Naive thymus-derived CD4-positive, alpha-beta T cell (primary cell): ENCODE measurements at regions of chr1 and their contacts with region 1.

Region 1: GRCh38 chr1:42035830-42036604 is 117.2 kb upstream of the GUCA2B start:
- DNase-seq: peak; percentile 92 to 100 (median 96)
- ATAC-seq: peak; percentile 98
- H3K4me3 ChIP-seq: peak overlapping the region; percentile 72
- H3K4me3 Mint-ChIP-seq: peak overlapping the region in 9 of 10 donors; percentile 74 to 88 (median 84)
- H3K27ac ChIP-seq: peak overlapping the region; percentile 74
- H3K27ac Mint-ChIP-seq: peak overlapping the region in 5 of 9 donors; percentile 37 to 82 (median 65)
- H3K4me1 ChIP-seq: peaks cover 25 to 43% of the 10 kb centered on the region in 2 donors
- H3K4me1 Mint-ChIP-seq: peaks cover 23 to 45% (median 39%) of the 10 kb centered on the region in 7 donors
- H3K27me3 ChIP-seq: no peaks in the 10 kb centered on the region
- H3K27me3 Mint-ChIP-seq: peaks cover 0 to 20% (median 0%) of the 10 kb centered on the region in 5 donors

Region 2: GRCh38 chr1:41360993-41361753 is 674.8 kb before region 1 on chr1 and contains the start of gene FOXO6:
- CTCF ChIA-PET with region 1: no interaction called
- POLR2A ChIA-PET with region 1: no interaction called
- intact Hi-C with region 1: loop called in 1 of 2 experiments (anchors 2 kb)
- DNase-seq: peak; percentile 87 to 94 (median 91)
- ATAC-seq: peak; percentile 95
- H3K4me3 ChIP-seq: peak within 1 kb of the TSS; percentile 51
- H3K4me3 Mint-ChIP-seq: peak within 1 kb of the TSS; percentile 65 to 86 (median 80)
- H3K27ac ChIP-seq: peak within 1 kb of the TSS; percentile 25
- H3K27ac Mint-ChIP-seq: peak within 1 kb of the TSS in 7 of 9 donors; percentile 3 to 91 (median 73)
- H3K4me1 ChIP-seq: peaks cover 4 to 6% of the 10 kb centered on the region in 2 donors
- H3K4me1 Mint-ChIP-seq: peaks cover 4 to 28% (median 9%) of the 10 kb centered on the region in 7 donors
- H3K27me3 ChIP-seq: peaks cover 5 to 7% of the 10 kb centered on the region in 2 donors
- H3K27me3 Mint-ChIP-seq: peaks cover 10 to 58% (median 35%) of the 10 kb centered on the region in 5 donors
- total RNA-seq, gene FOXO6: 0.66 to 1.3 TPM in 2 of 5 experiments, not detected in the others

Region 3: DNA sequence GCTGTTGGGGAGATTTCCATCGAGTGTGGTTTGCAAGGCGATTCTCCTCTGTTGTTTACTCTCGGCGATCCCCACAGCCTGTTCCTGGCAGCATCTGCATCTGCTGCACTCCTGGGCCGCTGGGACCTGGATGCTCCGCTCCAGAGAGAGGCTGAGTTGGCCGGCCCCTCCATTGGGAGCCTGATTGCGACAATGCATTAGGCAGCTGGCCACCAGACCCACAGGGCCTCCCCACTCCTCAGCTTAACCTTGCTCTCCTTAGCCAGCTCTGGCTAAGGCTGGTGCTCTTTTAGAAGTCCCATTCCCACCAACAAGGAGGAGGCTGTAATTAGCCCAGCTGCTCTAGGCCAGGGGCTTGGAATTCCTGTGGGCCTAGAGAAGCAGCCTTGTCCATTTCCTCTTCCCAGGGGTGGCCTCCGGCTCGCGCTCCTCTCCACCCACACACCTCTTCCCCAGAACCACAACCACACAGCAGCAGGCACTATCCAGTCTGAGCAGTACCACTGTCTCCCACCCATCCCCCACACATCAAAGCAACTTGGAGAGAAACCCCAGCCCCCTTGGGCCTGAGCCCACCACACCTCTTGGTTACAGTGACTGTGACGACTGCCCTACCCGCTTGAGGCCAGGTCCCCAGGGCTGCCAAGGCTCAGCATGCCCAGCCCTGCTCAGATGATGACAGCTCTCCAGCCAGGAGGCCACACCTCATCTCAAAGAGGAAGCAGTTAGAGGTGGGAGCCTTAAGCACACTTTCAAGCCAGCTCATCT is 357.7 kb before region 1 on chr1:
- CTCF ChIA-PET with region 1: no interaction called
- POLR2A ChIA-PET with region 1: no interaction called
- intact Hi-C with region 1: loop called in 1 of 2 experiments (anchors 5 kb)
- DNase-seq: no peak
- ATAC-seq: peak; percentile 46
- H3K4me3 ChIP-seq: no peak overlapping the region
- H3K4me3 Mint-ChIP-seq: peak overlapping the region in 2 of 10 donors; percentile 43 to 76
- H3K27ac ChIP-seq: no peak overlapping the region
- H3K27ac Mint-ChIP-seq: peak overlapping the region in 1 of 9 donors; percentile 90
- H3K4me1 ChIP-seq: peaks cover 40 to 49% of the 10 kb centered on the region in 2 donors
- H3K4me1 Mint-ChIP-seq: peaks cover 30 to 92% (median 58%) of the 10 kb centered on the region in 7 donors
- H3K27me3 ChIP-seq: no peaks in the 10 kb centered on the region
- H3K27me3 Mint-ChIP-seq: no peaks in the 10 kb centered on the region

Region 4: DNA sequence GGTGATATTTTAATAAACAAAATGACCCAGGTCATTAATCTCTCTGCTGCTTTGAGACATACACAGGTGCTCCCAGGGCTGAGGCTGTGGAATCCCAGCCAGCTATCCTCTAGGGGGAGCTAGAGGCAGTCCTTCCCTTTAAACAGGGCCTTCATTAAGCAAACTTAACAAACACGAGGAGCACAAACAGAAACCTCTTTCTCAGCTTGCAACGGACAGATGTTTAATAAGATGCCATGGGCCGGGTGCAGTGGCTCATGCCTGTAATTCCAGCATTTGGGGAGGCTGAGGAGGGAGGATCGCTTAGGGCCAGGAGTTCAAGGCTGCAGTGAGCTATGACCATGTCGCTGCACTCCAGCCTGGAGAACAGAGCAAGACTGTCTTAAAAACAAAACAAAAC is 224.0 kb before region 1 on chr1:
- CTCF ChIA-PET with region 1: no interaction called
- POLR2A ChIA-PET with region 1: no interaction called
- intact Hi-C with region 1: loop called (anchors 2 to 10 kb)
- DNase-seq: peak in 6 of 9 donors; percentile 23 to 63 (median 47)
- ATAC-seq: peak; percentile 77
- H3K4me3 ChIP-seq: no peak overlapping the region
- H3K4me3 Mint-ChIP-seq: peak overlapping the region in 1 of 10 donors; percentile 29
- H3K27ac ChIP-seq: no peak overlapping the region
- H3K27ac Mint-ChIP-seq: peak overlapping the region in 2 of 9 donors; percentile 21 to 66
- H3K4me1 ChIP-seq: peaks cover 5 to 28% of the 10 kb centered on the region in 2 donors
- H3K4me1 Mint-ChIP-seq: peaks cover 17 to 48% (median 26%) of the 10 kb centered on the region in 7 donors
- H3K27me3 ChIP-seq: no peaks in the 10 kb centered on the region
- H3K27me3 Mint-ChIP-seq: no peaks in the 10 kb centered on the region

Region 5: GRCh38 chr1:41919764-41920397 is 116.1 kb before region 1 on chr1:
- CTCF ChIA-PET with region 1: no interaction called
- POLR2A ChIA-PET with region 1: interaction called, 4 read pairs
- intact Hi-C with region 1: loop called (anchors 1 kb)
- DNase-seq: peak; percentile 51 to 82 (median 79)
- ATAC-seq: peak; percentile 89
- H3K4me3 ChIP-seq: peak overlapping the region; percentile 74
- H3K4me3 Mint-ChIP-seq: peak overlapping the region; percentile 90 to 97 (median 95)
- H3K27ac ChIP-seq: peak overlapping the region; percentile 52
- H3K27ac Mint-ChIP-seq: peak overlapping the region; percentile 84 to 99 (median 96)
- H3K4me1 ChIP-seq: peaks cover 48 to 54% of the 10 kb centered on the region in 2 donors
- H3K4me1 Mint-ChIP-seq: peaks cover 37 to 62% (median 56%) of the 10 kb centered on the region in 7 donors
- H3K27me3 ChIP-seq: no peaks in the 10 kb centered on the region
- H3K27me3 Mint-ChIP-seq: peaks cover 0 to 17% (median 0%) of the 10 kb centered on the region in 5 donors

Region 6: GRCh38 chr1:42109600-42109999 is 73.6 kb after region 1 on chr1:
- CTCF ChIA-PET with region 1: no interaction called
- POLR2A ChIA-PET with region 1: no interaction called
- intact Hi-C with region 1: no loop called
- DNase-seq: no peak
- ATAC-seq: no peak
- H3K4me3 ChIP-seq: no peak overlapping the region
- H3K4me3 Mint-ChIP-seq: no peak overlapping the region
- H3K27ac ChIP-seq: no peak overlapping the region
- H3K27ac Mint-ChIP-seq: no peak overlapping the region
- H3K4me1 ChIP-seq: no peaks in the 10 kb centered on the region
- H3K4me1 Mint-ChIP-seq: peaks cover 0 to 1% (median 0%) of the 10 kb centered on the region in 7 donors
- H3K27me3 ChIP-seq: no peaks in the 10 kb centered on the region
- H3K27me3 Mint-ChIP-seq: peaks cover 0 to 24% (median 10%) of the 10 kb centered on the region in 5 donors

Region 7: DNA sequence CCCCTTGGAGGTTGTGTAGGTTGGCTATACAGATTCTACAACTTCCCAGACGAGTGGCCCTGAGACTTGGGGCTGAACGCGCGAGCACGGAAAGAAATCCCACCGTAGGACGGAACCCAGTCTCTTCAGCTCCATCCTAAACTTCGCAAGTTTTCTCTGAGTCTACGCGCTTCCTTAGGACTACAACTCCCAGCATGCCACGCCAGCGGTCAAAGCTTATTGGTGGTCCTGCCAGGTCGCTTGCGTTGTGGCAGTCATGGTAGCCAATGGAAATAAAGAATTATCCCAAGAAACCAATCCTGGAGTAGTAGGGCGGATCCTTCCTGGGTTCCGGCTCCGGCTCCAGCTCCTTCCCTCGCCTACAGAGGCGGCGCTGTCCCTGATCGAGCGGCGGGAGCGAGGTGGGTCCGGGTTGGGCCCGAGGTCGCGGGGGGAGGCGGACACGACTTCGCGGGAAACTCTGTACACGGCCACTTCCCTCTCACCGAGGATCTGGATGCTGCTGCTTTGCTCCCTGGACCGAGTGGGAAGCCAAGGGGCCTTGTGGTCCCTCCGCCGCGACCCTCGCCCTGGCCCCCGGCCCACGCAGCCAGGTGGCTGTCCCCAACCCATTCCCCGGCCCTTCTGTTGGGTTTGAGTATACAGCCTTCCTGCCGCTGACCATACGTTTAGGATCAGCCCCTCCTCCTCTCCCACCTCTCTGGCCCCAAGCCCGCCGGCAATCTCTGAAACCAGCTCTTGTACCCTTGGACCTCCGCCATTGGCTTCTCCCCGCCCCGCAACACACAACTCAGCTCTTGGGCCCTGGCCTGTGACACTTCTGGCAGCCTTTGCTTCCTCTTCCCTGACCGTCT is 810.5 kb after region 1 on chr1 and contains the start of gene ZNF691:
- CTCF ChIA-PET with region 1: no interaction called
- POLR2A ChIA-PET with region 1: no interaction called
- intact Hi-C with region 1: loop called in 1 of 2 experiments (anchors 10 kb)
- DNase-seq: peak; percentile 51 to 91 (median 84)
- ATAC-seq: peak; percentile 99
- H3K4me3 ChIP-seq: peak within 1 kb of the TSS; percentile 97
- H3K4me3 Mint-ChIP-seq: peak within 1 kb of the TSS; percentile 84 to 100 (median 96)
- H3K27ac ChIP-seq: peak within 1 kb of the TSS; percentile 72
- H3K27ac Mint-ChIP-seq: peak within 1 kb of the TSS; percentile 71 to 95 (median 85)
- H3K4me1 ChIP-seq: peaks cover 11 to 22% of the 10 kb centered on the region in 2 donors
- H3K4me1 Mint-ChIP-seq: peaks cover 19 to 38% (median 31%) of the 10 kb centered on the region in 7 donors
- H3K27me3 ChIP-seq: no peaks in the 10 kb centered on the region
- H3K27me3 Mint-ChIP-seq: no peaks in the 10 kb centered on the region
- total RNA-seq, gene ZNF691: 3.5 to 17.2 (median 12.8) TPM